Psoas muscle (tissue), 8 donors: ENCODE measurements at regions of chr3 and their contacts with region 1.

Region 1: DNA sequence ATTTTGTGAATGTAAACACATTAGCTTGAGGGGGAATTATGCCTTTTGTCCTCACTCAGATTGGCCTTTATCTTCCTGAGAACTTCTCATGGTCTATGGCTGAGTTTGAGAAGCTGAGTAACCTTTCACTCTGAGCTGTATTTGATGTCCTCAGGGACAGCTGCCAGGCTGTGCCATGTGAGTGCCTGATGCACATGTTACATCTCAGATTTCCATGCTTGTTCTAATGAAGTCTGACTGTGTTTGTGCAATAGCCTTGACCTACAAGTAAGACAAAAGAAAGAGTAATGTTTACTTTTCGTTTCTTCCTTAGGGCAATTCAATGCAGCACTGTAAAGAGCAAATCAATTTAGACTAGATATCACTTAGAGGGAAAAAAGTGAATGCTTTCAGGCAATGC is 44.1 kb upstream of the ARL6 start:
- DNase-seq: peak in 1 of 2 donors; percentile 44
- ATAC-seq: peak; percentile 42 to 88 (median 76)
- H3K4me3 ChIP-seq: no peak overlapping the region
- H3K27ac ChIP-seq: no peak overlapping the region
- H3K4me1 ChIP-seq: peaks cover 8% of the 10 kb centered on the region
- H3K27me3 ChIP-seq: no peaks in the 10 kb centered on the region
- CTCF ChIP-seq: no peak

Region 2: DNA sequence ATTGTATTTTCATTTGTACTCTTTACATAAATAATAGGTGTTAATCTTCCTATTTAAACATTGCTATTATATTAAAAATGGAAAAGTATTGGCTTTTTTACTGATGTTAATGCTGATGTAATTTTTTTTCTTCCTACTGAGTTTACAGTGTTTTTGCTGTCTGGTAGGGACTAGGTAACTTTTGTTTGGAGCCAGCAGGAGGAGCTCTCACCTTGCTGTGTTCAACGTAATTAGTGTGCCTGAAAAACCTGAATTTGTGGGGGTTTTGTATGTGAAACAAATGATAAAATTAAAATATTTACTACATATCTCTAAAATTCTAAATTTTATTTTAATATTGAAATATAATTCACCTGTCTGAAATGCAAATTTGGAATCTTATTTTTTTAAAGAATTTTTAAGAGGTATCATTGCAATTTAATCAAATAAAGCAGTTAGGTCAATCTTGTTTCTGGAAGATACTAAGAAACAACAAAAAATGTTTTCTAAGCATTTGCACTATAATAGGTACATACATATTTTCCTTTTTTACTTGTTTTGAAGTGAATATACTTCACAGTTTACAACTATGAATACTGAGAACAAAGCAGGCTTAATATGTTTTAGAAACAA is 857.2 kb before region 1 on chr3:
- intact Hi-C with region 1: loop called in 1 of 2 experiments (anchors 10 kb)
- DNase-seq: no peak
- ATAC-seq: no peak
- H3K4me3 ChIP-seq: no peak overlapping the region
- H3K27ac ChIP-seq: no peak overlapping the region
- H3K4me1 ChIP-seq: no peaks in the 10 kb centered on the region
- H3K27me3 ChIP-seq: no peaks in the 10 kb centered on the region
- CTCF ChIP-seq: peak; percentile 45

Region 3: DNA sequence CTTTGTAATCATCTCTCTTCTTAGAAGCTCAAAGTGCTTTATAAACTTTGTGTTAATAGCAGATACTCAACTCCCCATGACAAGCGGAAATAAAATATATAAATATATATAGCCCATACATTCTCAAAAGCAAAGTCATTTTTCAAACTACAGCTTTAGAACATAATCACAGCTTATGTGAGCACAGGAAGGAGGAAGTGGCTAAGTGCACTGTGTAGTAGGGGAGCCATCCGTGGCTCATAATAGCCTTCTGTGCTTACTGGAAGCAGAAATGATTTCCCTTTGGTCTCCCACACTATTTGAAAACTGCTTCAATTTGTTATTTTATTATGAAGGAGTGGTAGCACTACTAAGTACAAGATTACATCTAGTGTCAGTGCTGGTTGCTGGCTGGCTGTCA is 107.3 kb before region 1 on chr3:
- intact Hi-C with region 1: no loop called
- DNase-seq: no peak
- ATAC-seq: no peak
- H3K4me3 ChIP-seq: no peak overlapping the region
- H3K27ac ChIP-seq: no peak overlapping the region
- H3K4me1 ChIP-seq: no peaks in the 10 kb centered on the region
- H3K27me3 ChIP-seq: no peaks in the 10 kb centered on the region
- CTCF ChIP-seq: no peak

Region 4: DNA sequence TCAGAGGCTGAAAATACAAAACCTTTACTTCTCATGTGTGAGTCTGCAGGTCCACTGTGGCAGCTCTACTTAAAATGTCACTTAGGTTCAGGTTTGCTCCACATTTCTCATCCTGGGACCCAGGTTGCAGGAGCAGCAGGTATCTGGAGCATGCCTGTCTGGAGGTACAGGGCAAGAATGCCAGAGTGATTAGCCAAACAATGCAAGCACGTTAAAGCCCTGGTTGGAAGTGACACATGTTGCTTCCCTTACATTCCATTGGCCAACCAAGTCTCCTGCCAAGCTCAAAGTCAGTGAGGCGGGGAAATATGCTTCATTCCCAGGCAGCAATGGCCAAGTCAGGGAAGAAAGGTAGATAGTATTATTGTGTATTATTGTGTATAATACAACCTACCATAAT is 32.7 kb before region 1 on chr3:
- intact Hi-C with region 1: no loop called
- DNase-seq: no peak
- ATAC-seq: no peak
- H3K4me3 ChIP-seq: no peak overlapping the region
- H3K27ac ChIP-seq: no peak overlapping the region
- H3K4me1 ChIP-seq: no peaks in the 10 kb centered on the region
- H3K27me3 ChIP-seq: no peaks in the 10 kb centered on the region
- CTCF ChIP-seq: no peak